ENCODE measurements at regions of chr6 and their contacts with region 1.

Region 1: GRCh38 chr6:56955171-56956045 is 501 bp downstream of the BEND6 start:
- DNase-seq: peak; percentile 87
- ATAC-seq: peak; percentile 83
- H3K4me3 ChIP-seq: peak overlapping the region; percentile 88 to 92
- H3K27ac ChIP-seq: peak overlapping the region; percentile 99
- H3K4me1 ChIP-seq: peaks cover 15 to 58% of the 10 kb centered on the region in 2 experiments
- H3K27me3 ChIP-seq: no peaks in the 10 kb centered on the region
- CTCF ChIP-seq: peak; percentile 81 to 90 (median 86)
- POLR2A ChIP-seq: no peak
- RAD21 ChIP-seq: peak; percentile 76

Region 2: DNA sequence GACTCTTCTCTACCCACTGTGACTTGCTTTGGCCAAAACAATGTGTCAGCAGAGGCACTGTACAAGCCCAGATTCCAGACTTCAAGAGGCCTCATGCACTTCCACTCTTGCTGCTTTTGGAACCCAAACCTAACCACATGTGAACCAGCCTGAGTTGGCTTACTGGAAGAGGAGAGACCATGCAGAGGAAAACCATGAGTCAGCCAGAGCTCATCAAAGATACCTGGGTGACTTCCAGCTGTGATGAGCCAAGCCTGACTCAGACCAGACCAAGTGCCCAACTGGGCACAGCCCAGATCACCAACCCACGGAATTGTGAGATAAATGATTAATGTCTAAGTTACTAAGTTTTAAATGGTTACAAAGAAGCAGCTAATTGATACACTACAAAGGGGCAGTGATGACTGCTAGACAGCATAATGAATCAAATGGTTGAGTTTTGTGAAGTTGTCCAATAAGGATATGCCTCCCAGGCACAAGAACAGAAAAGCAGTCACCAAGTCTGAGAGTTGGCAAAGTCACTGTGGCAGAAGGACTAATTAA is 16.7 kb before region 1 on chr6:
- CTCF ChIA-PET with region 1: interaction called, 9 read pairs
- POLR2A ChIA-PET with region 1: interaction called, 10 read pairs
- RAD21 ChIA-PET with region 1: no interaction called
- intact Hi-C with region 1: loop called (anchors 2 kb)
- DNase-seq: peak; percentile 100
- ATAC-seq: peak; percentile 93
- H3K4me3 ChIP-seq: peak overlapping the region in 1 of 2 experiments; percentile 42; a peak in 2 of 4 replicates
- H3K27ac ChIP-seq: peak overlapping the region; percentile 90
- H3K4me1 ChIP-seq: peaks cover 42 to 58% of the 10 kb centered on the region in 2 experiments
- H3K27me3 ChIP-seq: no peaks in the 10 kb centered on the region
- CTCF ChIP-seq: no peak
- POLR2A ChIP-seq: no peak
- RAD21 ChIP-seq: peak; percentile 22

Region 3: DNA sequence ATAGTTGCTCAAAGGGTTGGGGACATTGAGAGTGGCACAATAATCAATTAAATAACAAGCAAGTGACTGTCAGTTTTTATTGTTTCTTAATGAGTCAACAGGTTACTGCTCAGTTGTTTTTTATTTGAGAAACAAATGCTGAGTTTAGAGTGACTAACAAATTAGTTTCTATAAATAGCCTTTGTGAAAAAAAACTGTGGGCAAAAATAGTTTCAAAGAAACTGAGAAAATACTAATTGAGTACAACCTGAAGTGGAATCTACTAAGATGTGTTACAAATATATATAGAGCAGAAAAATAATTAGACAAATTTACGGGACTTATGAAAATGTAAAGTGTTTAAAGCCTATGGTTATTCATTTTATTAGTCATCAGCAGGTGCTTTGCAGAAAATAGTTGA is 21.8 kb after region 1 on chr6:
- CTCF ChIA-PET with region 1: no interaction called
- POLR2A ChIA-PET with region 1: no interaction called
- RAD21 ChIA-PET with region 1: no interaction called
- intact Hi-C with region 1: no loop called
- DNase-seq: no peak
- ATAC-seq: no peak
- H3K4me3 ChIP-seq: no peak overlapping the region
- H3K27ac ChIP-seq: no peak overlapping the region
- H3K4me1 ChIP-seq: no peaks in the 10 kb centered on the region
- H3K27me3 ChIP-seq: no peaks in the 10 kb centered on the region
- CTCF ChIP-seq: no peak
- POLR2A ChIP-seq: no peak
- RAD21 ChIP-seq: no peak

Region 4: GRCh38 chr6:57021086-57021720 is 65.8 kb after region 1 on chr6:
- CTCF ChIA-PET with region 1: interaction called, 3 read pairs
- POLR2A ChIA-PET with region 1: no interaction called
- RAD21 ChIA-PET with region 1: no interaction called
- intact Hi-C with region 1: loop called (anchors 5 kb)
- DNase-seq: peak; percentile 51
- ATAC-seq: peak; percentile 96
- H3K4me3 ChIP-seq: no peak overlapping the region
- H3K27ac ChIP-seq: no peak overlapping the region
- H3K4me1 ChIP-seq: peaks cover 0 to 4% of the 10 kb centered on the region in 2 experiments; a peak in 1 of 4 replicates
- H3K27me3 ChIP-seq: no peaks in the 10 kb centered on the region
- CTCF ChIP-seq: peak; percentile 39 to 64 (median 52); a peak in 4 of 6 replicates
- POLR2A ChIP-seq: no peak
- RAD21 ChIP-seq: peak; percentile 59

Region 5: DNA sequence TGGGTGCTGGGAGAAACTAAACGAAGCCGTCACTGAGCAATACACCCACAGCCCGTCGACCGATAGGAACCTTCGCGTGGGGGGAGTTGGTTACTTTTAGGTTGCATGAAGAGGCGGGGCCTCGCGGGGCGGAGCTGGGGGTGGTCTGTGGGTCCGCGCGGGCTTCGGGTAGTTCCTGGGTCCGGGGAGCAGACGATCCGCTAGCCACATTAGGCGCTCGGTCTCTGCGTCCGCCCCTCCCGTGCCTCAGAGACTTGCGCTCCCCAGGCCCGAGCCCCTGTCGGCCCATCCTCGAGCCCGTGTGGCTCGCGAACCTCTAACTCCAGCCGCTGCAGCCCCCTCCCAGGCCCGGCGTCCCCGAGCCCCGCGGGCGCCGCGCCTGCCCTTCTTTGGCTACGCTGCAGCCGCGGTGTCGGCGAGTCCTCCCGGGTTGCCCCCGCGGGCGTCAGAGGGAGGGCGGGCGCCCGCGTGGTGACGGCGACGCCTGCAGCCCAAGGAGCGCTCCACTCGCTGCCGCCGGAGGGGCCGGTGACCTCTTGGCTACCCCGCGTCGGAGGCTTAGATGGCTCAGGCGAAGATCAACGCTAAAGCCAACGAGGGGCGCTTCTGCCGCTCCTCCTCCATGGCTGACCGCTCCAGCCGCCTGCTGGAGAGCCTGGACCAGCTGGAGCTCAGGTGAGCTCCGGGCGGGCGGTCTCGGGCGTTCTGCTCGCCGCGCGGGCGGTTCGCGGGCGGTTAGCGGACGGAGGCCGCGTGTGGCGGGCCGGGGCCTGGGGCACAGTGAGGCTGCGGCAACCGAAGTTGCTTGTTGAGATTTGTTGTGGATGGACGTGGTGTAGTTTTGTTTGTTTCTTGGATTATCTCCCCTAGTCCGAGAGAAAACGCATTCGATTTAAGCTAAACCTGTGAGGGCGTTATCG is 217.0 kb after region 1 on chr6 and contains the start of gene BAG2:
- CTCF ChIA-PET with region 1: interaction called, 4 read pairs
- POLR2A ChIA-PET with region 1: no interaction called
- RAD21 ChIA-PET with region 1: no interaction called
- intact Hi-C with region 1: loop called (anchors 5 kb)
- DNase-seq: peak; percentile 74
- ATAC-seq: peak; percentile 90
- H3K4me3 ChIP-seq: peak within 1 kb of the TSS; percentile 78 to 85
- H3K27ac ChIP-seq: peak within 1 kb of the TSS; percentile 90
- H3K4me1 ChIP-seq: peaks cover 6 to 20% of the 10 kb centered on the region in 2 experiments
- H3K27me3 ChIP-seq: no peaks in the 10 kb centered on the region
- CTCF ChIP-seq: no peak
- POLR2A ChIP-seq: peak; percentile 96
- RAD21 ChIP-seq: peak; percentile 9; the same call in 1 of the 2 replicates
- total RNA-seq, gene BAG2: 13.5 TPM